Posterior vena cava (tissue), 2 donors: ENCODE measurements at regions of chr4 and their contacts with region 1.

Region 1: DNA sequence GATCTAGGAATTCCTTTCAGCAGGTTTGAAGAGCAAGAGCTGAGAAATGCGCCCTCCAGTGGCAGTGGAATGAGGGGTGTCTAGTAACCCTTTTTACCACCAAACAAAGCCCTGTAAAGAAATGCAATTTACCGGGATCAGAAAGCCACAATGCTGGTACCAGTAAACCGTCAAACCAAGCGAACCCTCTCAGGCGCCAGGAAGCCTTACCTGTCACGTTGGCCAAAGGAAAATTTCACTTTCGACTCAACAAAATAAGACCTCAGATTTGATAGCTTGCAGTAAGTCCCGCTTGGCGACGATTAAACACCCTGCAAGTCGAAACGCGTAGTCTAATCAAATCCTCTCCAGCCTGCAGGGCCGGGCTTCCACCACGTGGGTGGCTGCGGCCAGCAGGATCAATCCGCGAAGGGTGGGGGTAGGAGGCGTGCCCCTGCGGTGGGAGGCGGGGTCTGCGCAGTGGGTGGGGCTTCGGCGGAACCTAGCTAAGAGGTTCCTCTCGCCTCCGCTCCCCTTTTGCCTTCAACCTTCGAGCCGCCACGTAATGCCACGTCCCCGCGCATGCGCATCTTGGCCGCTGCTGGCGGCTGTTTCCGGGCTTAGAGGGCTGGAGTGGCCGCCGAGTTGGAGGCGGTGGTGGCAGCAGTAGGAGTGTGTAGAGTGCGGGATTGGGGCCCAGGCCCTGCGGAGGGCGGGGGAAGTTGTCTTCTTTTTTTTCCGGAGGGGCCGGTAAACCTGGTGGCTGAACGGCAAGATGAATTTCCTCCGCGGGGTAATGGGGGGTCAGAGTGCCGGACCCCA is at the start of gene USO1:
- DNase-seq: peak; percentile 100
- total RNA-seq, gene USO1: 68.8 to 77.3 TPM

Region 2: GRCh38 chr4:74583077-74583693 is 1141.1 kb before region 1 on chr4:
- intact Hi-C with region 1: no loop called
- DNase-seq: no peak

Region 3: DNA sequence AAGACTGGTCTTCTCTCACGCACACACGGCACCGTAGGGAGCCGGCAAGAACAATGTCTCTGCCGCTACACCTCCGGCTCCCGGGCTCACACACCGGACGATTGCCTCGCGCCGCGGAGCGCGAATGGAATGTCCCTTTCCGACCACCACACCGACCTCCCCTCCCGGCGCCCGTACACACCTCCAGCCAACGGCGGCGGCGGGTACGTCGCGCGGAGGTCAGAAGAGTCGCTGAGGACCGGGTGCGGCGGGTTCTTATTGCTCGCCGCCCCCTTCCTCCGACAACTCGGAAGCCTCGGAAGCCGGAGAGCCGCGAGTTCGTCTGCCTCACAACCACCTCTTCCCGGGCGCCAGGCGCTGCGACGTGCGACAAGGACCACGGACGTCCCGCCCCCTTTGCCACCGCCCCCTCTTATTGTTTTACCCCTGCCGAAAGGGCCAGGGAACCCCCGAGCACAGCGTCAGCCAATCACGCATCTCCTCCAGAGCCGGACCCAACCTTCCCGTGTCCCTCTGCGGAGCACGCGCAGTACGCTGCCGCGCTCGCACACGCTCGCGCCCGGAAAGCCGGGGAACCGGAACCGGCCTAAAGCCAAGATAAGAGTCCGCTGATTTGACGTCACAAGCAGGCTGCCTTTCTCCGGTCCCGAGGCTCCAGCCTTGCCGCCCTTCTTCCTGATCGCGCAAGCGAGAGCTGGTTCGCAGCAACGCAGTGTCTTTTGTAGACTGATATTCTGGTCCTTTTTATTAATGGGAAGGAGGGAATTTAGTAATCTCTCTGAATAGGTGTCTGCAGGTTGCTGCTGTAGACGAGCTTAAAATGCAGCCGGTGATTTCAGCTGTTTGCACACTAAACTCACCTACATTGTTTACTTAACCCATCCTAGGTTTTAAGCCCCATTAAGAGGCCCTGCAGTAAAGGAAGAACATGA is 51.0 kb before region 1 on chr4 and contains the start of gene G3BP2:
- intact Hi-C with region 1: loop called in 1 of 2 experiments (anchors 10 kb)
- DNase-seq: peak; percentile 100
- total RNA-seq, gene G3BP2: 76.7 to 87.3 TPM